ENCODE measurements at regions of chr17 and their contacts with region 1.

Region 1: DNA sequence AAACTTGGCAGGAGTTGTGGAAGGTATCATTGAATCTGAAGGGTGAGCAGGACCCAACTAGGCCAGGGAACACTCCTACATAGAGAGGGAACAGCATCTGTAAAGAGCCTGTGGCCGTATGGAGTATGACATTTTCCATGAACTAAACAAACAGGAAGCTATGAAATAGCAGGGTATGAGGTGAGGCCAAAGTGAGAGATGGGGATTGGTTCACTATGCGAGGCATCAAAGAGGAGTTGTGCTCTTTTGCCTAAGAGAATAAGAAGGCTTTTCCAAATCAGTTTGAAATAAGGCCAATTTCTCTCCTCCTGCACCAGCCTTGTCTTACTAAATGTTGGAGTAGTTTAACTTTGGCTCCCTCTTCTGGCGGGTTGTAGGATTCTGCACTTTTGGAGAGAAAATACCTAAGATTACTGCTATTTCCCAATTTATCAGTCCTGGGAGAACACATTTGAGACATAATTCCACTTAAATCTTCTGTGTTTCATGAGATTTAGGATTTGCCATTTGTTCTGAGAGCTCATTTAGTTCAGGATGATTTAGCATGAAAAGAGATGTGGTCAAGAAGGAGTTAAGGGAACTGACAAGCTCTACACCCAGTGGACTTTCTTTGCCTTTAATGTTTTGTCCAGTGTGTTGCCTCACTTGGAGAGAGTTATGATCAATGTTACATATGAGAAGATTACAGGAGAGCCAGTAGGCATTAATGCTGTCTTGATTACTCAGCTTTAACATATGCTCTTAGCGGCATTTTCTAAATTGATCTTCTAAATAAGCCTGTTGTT is 55.4 kb downstream of the TNRC6C start:
- ATAC-seq: peak; percentile 41 to 86 (median 74)
- H3K4me3 ChIP-seq: no peak overlapping the region
- H3K27ac ChIP-seq: no peak overlapping the region
- H3K4me1 ChIP-seq: peaks cover 11 to 17% of the 10 kb centered on the region in 2 donors

Region 2: DNA sequence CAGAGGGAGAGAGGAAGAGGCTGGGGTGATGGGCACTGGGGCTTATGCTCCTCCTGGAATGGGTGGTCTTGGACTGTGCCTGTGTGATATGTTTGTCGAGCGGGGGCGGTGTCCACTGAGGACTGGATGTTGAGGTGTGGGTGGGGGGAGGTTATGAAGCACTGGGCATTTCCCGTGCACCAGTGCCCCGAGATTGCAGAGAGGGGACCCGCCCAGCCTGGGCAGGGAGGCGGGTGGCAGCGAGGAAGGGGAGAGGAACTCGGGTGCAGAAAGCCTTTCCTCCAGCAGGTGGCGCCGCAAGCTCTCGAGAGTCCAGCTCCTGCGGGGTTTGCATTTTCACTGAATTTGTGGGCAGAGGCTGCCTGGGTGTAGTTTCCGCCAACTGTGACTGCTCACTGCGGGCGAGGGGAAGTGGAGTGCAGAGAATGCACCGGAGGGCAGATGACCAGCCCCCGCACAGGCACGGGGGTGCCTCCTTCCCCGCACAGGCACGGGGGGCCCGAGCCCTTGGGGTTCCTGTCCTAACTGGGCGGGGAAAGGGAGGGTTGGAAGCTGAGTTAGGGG is 682.5 kb before region 1 on chr17:
- in situ Hi-C with region 1: loop called in 1 of 9 experiments (anchors 25 kb)
- ATAC-seq: peak; percentile 73 to 98 (median 86)
- H3K4me3 ChIP-seq: peak overlapping the region in 1 of 5 donors; percentile 10
- H3K27ac ChIP-seq: no peak overlapping the region
- H3K4me1 ChIP-seq: peaks cover 0 to 6% of the 10 kb centered on the region in 2 donors

Region 3: GRCh38 chr17:77542551-77543490 is 471.1 kb before region 1 on chr17:
- in situ Hi-C with region 1: loop called in 5 of 9 experiments (anchors 25 kb)
- ATAC-seq: peak; percentile 71 to 91 (median 86)
- H3K4me3 ChIP-seq: no peak overlapping the region
- H3K27ac ChIP-seq: no peak overlapping the region
- H3K4me1 ChIP-seq: peaks cover 42 to 47% of the 10 kb centered on the region in 2 donors

Measured in motor neuron (in vitro differentiated cells).